Posterior vena cava (tissue), 2 donors: ENCODE measurements at regions of chr12 and their contacts with region 1.

Region 1: GRCh38 chr12:2212971-2213869 is 160.4 kb downstream of the CACNA1C start:
- DNase-seq: no peak

Region 2: DNA sequence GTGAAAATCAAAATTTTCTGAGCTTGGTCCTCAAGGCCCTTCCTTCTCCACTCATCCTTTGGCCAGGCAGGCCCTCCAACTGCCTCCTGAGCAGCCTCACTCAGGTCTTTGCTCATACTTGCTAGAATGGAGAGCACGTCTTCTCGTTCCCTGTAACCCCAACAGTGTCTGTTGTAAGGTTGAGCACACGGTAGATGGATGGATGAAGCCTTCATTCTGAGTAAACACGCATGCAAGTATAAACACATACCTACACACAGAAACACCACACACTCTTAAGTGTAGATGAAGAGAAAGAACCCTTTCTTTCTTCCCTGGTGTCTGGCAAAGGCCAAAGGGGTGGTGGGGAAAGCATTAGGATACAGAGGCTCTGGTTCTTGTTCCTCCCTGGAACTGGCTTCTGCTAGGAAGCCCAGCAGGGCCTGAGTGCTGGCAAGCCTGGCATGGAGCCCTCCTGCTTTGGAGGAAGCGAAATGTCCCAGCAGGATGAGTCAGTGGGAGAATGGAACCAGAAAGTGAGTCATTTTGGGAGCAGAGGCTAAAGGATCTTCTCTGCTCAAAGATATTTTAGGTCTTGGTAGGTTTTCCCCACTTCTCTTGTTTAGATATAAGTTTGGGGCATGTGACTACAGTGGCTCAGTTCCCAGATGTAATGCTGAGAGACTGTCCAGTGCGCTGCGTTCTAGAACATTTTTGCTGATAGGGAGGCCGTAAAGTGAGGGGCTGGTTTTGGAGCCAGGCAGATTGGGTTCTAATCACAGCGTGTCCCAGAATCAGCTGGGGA is 33.1 kb before region 1 on chr12:
- intact Hi-C with region 1: loop called in 1 of 2 experiments (anchors 2 kb)
- DNase-seq: peak; percentile 94

Region 3: DNA sequence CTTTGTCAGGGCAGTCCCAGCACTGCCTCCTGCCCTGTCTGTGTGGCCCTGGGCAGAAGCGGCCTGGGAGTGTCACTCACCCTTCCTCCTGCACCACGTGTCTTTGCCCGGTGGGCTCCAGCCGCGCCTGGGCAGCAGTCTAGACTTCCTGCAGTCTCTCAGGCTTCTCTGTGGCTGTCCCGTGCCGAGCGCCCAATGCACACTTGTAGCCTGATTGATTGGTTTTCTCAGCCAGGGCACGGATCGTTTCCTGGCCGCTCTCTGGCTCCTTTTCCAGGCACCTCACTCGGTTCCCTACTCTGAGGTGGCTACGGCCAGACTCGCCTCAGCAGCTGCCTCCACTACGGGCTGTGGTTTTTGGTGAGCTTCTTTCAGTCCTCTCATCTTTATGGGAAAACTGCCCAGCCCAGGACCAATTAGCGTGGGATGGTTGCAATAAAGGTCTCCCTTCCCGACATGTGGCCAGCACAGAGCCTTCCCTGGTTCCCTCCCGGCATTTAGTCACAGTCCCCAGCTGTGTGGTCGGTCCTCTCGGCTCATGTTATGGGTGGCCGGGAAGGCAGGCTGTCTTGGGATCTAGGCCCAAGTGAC is 27.4 kb before region 1 on chr12:
- intact Hi-C with region 1: loop called in 1 of 2 experiments (anchors 2 kb)
- DNase-seq: no peak